ENCODE measurements at regions of chr12 and their contacts with region 1.

Region 1: GRCh38 chr12:126874427-126875026 is 1392.4 kb upstream of the TMEM132C start:
- DNase-seq: no peak
- H3K4me3 ChIP-seq: no peak overlapping the region
- H3K27ac ChIP-seq: no peak overlapping the region
- H3K4me1 ChIP-seq: no peaks in the 10 kb centered on the region
- H3K27me3 ChIP-seq: peaks cover 2% of the 10 kb centered on the region
- CTCF ChIP-seq: peak; percentile 23 to 65 (median 52)
- POLR2A ChIP-seq: no peak

Region 2: DNA sequence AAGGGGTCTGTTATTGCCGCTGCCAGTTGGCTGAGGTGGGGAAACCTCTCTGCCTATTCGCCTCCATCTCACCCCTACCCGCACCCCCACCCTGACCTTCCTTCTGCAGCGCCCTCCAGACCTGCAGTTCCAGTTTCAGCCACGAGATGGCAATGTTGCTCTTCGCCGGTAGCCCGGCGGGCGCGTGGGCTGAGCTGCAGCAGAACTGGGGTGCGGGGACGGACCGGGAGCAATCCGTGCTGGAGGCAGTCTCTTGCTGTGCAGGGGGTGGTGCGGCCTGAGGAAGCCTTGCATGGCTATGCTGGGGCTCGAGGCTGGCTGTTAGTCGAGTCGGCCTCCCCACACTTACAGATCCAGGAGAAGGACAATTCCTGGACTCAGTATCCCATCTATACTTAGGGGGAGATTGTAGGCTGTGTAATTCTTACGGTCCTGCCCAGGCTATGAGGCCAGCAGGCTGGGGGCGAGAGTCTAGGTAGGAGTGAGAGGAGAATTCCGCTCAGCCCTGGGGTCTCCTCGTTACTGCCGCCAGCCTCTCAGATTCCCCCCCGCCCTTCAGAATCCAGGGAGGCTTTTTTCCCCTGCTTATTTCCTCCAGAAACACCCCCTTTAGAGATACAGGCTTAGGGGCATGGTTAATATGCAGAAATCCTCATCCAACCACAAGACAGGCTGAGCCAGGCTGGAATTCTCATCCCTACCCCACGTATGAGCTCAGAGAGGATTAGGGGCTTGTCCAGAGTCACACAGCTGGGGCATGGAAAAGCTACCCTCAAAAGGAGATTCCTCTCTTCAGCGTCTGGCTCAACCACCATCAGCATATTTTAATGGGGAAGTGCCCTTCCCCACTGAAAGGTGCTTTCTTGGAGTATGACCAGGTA is 1691.1 kb before region 1 on chr12:
- intact Hi-C with region 1: loop called (anchors 5 kb)
- DNase-seq: peak; percentile 71
- H3K4me3 ChIP-seq: no peak overlapping the region
- H3K27ac ChIP-seq: no peak overlapping the region
- H3K4me1 ChIP-seq: peaks cover 8% of the 10 kb centered on the region
- H3K27me3 ChIP-seq: peaks cover 8% of the 10 kb centered on the region
- CTCF ChIP-seq: peak; percentile 92 to 99 (median 96)
- POLR2A ChIP-seq: no peak

Region 3: GRCh38 chr12:125330645-125331341 is 1543.7 kb before region 1 on chr12:
- intact Hi-C with region 1: loop called (anchors 10 kb)
- DNase-seq: peak; percentile 16
- H3K4me3 ChIP-seq: peak overlapping the region in 1 of 2 donors; percentile 28
- H3K27ac ChIP-seq: no peak overlapping the region
- H3K4me1 ChIP-seq: no peaks in the 10 kb centered on the region
- H3K27me3 ChIP-seq: no peaks in the 10 kb centered on the region
- CTCF ChIP-seq: peak; percentile 50 to 67 (median 60)
- POLR2A ChIP-seq: no peak

Region 4: DNA sequence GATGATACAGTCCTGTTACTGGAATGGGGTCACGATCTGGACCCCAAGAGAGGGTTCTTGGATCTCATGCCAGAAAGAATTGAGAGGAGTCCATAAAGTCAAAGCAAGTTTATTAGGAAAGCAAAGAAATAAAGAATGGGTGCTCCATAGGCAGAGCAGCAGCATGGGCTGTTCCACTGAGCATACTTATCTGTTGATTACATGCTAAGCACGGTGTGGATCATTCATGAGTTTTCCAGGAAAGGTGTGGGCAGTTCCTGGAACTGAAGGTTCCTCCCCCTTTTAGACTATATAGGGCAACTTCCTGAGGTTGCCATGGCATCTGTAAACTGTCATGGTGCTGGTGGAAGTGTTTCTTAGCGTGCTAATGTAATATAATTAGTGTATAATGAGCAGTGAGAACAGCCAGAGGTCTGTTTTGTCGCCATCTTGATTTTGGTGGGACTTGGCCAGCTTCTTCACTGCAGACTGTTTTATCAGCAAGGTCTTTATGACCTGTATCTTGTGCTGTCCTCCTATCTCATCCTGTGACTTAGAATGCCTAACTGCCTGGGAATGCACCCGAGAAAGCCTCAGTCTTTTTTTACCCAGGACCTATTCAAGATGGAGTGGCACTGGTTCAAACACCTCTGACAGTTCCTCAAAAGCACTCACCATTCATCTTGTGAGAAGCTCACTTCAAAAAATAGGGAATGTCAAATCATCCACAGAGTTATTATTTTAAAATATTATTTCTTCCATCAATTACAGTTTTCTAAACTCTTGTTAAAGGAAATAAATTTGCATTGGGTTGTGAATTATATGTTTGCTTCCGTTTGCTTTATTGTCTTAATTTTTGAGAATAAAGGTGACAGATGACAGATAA is 33.6 kb after region 1 on chr12:
- intact Hi-C with region 1: no loop called
- DNase-seq: no peak
- H3K4me3 ChIP-seq: no peak overlapping the region
- H3K27ac ChIP-seq: no peak overlapping the region
- H3K4me1 ChIP-seq: no peaks in the 10 kb centered on the region
- H3K27me3 ChIP-seq: no peaks in the 10 kb centered on the region
- CTCF ChIP-seq: no peak
- POLR2A ChIP-seq: no peak